ENCODE measurements at regions of chr1 and their contacts with region 1.

Region 1: GRCh38 chr1:172638885-172639831 is 19.7 kb upstream of the FASLG start:
- DNase-seq: peak; percentile 92
- H3K4me3 Mint-ChIP-seq: peak overlapping the region; percentile 77
- H3K27ac Mint-ChIP-seq: peak overlapping the region; percentile 100
- H3K4me1 Mint-ChIP-seq: peaks cover 74% of the 10 kb centered on the region
- H3K27me3 Mint-ChIP-seq: peaks cover 3% of the 10 kb centered on the region

Region 2: GRCh38 chr1:172357753-172358385 is 281.3 kb before region 1 on chr1:
- intact Hi-C with region 1: loop called (anchors 1 kb)
- DNase-seq: no peak
- H3K4me3 Mint-ChIP-seq: peak overlapping the region; percentile 7
- H3K27ac Mint-ChIP-seq: peak overlapping the region; percentile 84
- H3K4me1 Mint-ChIP-seq: peaks cover 45% of the 10 kb centered on the region
- H3K27me3 Mint-ChIP-seq: no peaks in the 10 kb centered on the region

Region 3: DNA sequence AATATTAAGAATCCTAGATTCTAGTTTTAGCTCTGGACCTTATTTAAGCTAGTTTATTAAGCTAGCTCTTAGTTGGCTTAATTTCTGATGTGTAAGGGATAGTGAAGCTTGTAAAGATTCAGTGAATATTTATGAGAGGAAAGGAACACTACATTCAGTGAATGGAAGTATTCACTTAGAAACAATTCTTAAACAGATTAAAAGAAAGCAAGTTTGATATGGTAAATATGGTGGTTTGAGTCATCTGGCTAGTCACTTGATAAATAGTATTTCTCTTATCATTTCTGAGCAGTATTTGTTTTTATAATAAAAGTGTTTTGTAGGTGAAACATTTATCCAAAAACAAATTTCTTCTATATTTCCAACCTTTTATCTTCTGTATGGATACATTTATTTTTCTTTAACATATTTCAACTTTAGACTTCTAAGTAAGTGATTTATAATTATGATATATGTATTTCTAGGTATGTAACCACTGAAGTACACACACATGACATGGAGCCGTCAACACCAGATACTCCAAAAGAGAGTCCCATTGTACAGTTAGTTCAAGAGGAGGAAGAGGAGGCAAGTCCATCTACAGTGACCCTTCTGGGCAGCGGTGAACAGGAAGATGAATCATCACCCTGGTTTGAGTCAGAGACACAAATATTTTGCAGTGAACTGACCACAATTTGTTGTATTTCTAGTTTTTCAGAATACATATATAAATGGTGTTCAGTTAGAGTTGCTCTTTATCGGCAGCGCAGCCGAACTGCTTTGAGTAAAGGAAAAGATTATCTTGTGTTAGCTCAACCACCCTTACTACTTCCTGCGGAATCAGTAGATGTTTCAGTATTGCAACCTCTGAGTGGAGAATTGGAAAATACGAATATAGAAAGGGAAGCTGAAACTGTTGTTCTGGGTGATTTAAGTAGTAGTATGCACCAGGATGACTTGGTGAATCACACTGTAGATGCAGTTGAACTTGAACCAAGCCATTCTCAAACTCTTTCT is 50.6 kb before region 1 on chr1:
- intact Hi-C with region 1: loop called (anchors 5 kb)
- DNase-seq: no peak
- H3K4me3 Mint-ChIP-seq: no peak overlapping the region
- H3K27ac Mint-ChIP-seq: peak overlapping the region; percentile 85
- H3K4me1 Mint-ChIP-seq: peaks cover 12% of the 10 kb centered on the region
- H3K27me3 Mint-ChIP-seq: no peaks in the 10 kb centered on the region

Region 4: DNA sequence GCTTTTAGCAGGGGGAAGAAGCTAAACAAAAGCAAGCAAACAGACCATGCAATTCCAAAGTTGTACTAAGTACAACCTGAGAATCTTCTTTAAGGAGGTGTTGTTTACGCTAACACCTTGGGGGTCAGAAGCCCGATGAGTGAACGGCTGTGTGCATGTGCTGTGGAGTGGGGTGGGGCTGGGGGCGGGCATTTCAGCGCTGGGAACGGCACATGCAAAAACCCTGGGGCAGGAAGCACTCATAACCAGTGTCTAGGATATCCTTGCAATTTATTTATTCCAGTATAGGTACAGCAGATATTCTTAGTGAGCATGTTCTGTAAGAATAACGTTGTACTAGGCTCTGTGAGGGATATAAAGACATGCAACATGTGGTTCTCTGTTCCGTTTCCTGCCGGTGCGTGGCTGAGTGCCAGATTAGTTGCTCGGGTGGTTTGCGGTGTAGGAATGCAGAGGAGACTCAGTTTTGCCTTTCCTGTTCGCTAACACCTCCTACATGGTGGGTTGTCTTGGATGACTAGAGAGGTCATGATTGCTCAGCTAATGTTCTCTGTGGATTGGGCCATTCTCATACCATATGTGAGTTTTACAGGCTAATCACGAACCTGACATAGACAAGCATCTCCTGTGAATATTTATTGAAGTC is 23.4 kb after region 1 on chr1:
- intact Hi-C with region 1: loop called (anchors 1 kb)
- DNase-seq: peak; percentile 94
- H3K4me3 Mint-ChIP-seq: peak overlapping the region; percentile 79
- H3K27ac Mint-ChIP-seq: peak overlapping the region; percentile 83
- H3K4me1 Mint-ChIP-seq: peaks cover 64% of the 10 kb centered on the region
- H3K27me3 Mint-ChIP-seq: peaks cover 2% of the 10 kb centered on the region

Region 5: DNA sequence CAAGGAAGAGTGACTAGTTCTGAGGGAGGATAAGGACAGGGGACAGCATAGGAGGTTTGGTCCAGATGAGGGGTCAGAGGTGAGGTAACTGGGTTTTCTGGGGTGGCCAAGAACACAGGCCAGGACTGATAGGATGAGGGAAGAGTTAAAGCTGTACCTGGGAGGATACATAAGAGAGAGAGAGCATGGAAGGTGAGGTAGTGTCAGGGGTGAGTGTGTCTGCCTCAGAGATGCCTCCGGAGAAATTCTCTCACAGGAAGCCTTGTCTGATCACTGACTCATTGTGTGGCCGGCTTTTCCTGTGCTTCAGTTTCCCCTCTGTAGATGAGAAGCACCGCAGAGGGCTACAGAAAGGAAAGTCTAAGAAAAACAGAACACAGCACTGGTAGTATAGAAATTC is 60.0 kb after region 1 on chr1:
- intact Hi-C with region 1: loop called (anchors 1 kb)
- DNase-seq: peak; percentile 92
- H3K4me3 Mint-ChIP-seq: peak overlapping the region; percentile 82
- H3K27ac Mint-ChIP-seq: peak overlapping the region; percentile 90
- H3K4me1 Mint-ChIP-seq: peaks cover 49% of the 10 kb centered on the region
- H3K27me3 Mint-ChIP-seq: no peaks in the 10 kb centered on the region

Region 6: GRCh38 chr1:172719694-172720138 is 80.6 kb after region 1 on chr1:
- intact Hi-C with region 1: loop called (anchors 1 kb)
- DNase-seq: peak; percentile 79
- H3K4me3 Mint-ChIP-seq: no peak overlapping the region
- H3K27ac Mint-ChIP-seq: peak overlapping the region; percentile 35
- H3K4me1 Mint-ChIP-seq: peaks cover 42% of the 10 kb centered on the region
- H3K27me3 Mint-ChIP-seq: no peaks in the 10 kb centered on the region

Region 7: DNA sequence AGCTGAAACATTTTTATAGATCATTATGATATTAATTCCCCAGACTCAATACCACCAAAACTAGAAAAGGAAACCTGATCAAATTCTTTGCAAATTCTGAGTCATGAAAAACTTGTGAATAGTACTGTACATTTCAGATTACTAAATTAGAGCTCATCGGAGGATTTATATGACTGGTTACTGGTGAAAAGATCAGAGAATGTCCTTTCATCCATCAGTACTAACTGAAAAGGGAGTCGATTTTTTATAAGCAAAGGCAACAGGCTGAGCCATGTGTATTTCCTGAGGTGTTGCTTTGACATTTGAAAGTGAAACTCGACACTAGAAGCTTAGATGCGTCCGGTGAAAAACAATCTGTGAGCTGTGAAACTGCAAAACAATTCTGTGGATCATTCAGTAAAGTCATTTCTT is 255.9 kb after region 1 on chr1:
- intact Hi-C with region 1: loop called (anchors 10 kb)
- DNase-seq: peak; percentile 82
- H3K4me3 Mint-ChIP-seq: peak overlapping the region; percentile 72
- H3K27ac Mint-ChIP-seq: peak overlapping the region; percentile 14
- H3K4me1 Mint-ChIP-seq: peaks cover 38% of the 10 kb centered on the region
- H3K27me3 Mint-ChIP-seq: peaks cover 38% of the 10 kb centered on the region